ENCODE measurements at regions of chr3 and their contacts with region 1.

Region 1: DNA sequence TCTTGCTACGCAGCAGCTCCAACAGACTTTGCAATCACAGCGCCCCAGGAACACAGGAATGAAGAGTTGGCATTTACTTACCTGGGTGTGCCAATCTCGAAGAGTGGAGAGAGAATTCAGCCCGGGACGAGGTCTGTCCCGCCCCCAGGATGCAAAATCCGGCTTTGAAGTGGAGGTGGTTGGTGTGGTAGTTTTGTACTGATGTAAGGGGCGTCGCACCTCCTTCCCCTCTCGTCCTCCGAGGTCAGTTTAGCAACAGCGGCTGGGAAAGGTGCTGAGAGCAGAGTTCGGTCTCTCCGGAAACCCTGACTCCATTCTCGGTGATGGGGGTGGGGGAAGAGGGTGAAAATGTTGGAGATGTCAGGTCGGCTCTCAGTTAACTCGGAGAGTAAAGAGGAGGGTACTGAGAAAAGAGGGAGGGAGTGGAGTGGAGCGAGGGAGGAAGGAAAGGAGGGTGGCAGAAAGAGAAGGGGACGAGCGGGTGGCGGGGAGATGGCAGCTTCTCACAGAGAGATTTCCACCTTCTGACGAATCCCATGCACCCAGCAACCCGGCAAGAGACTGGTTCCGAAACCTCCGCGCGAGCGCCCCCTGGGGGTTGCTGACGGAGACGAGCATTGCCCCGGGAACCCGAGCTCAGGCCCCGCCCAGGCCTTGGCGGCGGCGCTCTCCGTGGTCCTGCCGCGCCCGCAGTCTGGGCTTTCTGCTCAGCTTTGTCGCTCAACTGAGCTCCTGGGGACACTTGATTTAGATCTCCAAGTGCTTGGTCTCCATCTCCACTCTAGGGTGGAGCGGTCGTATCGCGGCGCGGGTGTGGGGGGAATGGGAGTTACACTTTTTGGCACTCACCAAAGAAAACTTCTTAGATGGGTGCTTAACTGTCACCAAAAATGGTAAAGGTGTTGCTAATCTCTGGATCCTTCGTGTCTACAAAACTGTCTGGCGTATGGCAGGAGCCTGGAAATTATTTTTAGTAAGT is at the start of gene CPNE4:
- DNase-seq: no peak
- H3K4me3 ChIP-seq: peak within 1 kb of the TSS; percentile 36
- CTCF ChIP-seq: peak; percentile 97

Region 2: DNA sequence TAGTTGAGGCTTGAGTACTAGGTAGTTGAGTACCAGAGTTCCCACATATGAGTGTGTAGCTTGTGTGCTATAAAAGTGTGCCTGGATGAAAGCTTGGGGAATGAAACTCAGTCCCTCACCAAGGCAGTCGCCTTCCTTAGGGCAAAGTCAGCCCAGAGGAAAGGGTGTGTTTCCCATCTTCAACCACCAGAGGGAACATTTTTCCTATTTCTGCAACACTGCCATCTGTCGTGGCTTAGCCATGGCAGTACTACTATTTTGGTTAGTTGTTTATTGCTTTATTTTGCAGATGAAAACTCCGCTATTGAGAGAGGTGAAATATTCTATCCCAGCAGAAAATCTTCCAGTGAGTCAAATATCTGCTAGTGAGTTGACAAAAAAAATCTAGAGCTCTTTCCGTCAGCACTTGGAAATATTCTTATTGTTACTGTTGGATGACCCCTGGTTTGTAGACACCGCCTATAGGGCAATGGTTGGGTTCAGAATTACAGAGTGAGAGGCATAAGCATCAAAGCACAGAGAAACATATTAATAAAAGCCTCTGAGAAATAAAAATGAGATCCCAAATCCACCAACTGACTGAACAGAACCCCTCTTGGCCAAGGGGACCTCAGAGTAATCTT is 239.9 kb before region 1 on chr3:
- CTCF ChIA-PET with region 1: interaction called, 218 read pairs
- POLR2A ChIA-PET with region 1: no interaction called
- DNase-seq: peak; percentile 21
- H3K4me3 ChIP-seq: no peak overlapping the region
- CTCF ChIP-seq: peak; percentile 80

Region 3: GRCh38 chr3:132135628-132136333 is 101.0 kb after region 1 on chr3:
- CTCF ChIA-PET with region 1: interaction called, 12 read pairs
- POLR2A ChIA-PET with region 1: no interaction called
- DNase-seq: peak; percentile 95
- H3K4me3 ChIP-seq: peak overlapping the region; percentile 45
- CTCF ChIP-seq: no peak

Region 4: DNA sequence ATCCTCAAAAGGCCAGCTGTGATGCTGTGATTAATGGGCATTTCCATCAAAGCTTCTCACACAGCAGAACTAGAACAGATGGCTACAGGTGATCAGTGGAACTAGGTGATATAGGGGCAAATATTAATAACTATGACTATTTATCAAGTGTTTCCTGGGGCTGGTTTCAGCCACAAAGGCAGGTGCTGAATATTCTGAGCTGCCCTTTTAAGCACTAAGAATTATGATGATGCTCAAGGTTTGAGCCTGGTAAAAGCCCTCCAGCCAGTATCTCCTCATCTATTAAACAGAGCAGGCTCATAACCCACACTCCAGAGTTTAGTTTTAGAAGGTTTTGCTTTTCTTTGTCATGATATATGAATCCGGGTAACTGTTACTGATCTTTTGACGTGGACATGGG is 153.0 kb after region 1 on chr3:
- CTCF ChIA-PET with region 1: interaction called, 454 read pairs
- POLR2A ChIA-PET with region 1: no interaction called
- DNase-seq: no peak
- H3K4me3 ChIP-seq: no peak overlapping the region
- CTCF ChIP-seq: no peak

Region 5: GRCh38 chr3:132210476-132211346 is 175.9 kb after region 1 on chr3:
- CTCF ChIA-PET with region 1: interaction called, 28 read pairs
- POLR2A ChIA-PET with region 1: no interaction called
- DNase-seq: no peak
- H3K4me3 ChIP-seq: no peak overlapping the region
- CTCF ChIP-seq: peak; percentile 35

Region 6: GRCh38 chr3:132261506-132261905 is 226.7 kb after region 1 on chr3:
- CTCF ChIA-PET with region 1: no interaction called
- POLR2A ChIA-PET with region 1: no interaction called
- DNase-seq: no peak
- H3K4me3 ChIP-seq: no peak overlapping the region
- CTCF ChIP-seq: no peak